Posterior cingulate gyrus (tissue), 11 donors: ENCODE measurements at regions of chr17 and their contacts with region 1.

Region 1: GRCh38 chr17:29613352-29613837 is 9.3 kb downstream of the CORO6 start:
- DNase-seq: peak; percentile 90 to 99 (median 94)

Region 2: GRCh38 chr17:29461483-29462206 is 151.8 kb before region 1 on chr17:
- intact Hi-C with region 1: no loop called
- DNase-seq: no peak

Region 3: DNA sequence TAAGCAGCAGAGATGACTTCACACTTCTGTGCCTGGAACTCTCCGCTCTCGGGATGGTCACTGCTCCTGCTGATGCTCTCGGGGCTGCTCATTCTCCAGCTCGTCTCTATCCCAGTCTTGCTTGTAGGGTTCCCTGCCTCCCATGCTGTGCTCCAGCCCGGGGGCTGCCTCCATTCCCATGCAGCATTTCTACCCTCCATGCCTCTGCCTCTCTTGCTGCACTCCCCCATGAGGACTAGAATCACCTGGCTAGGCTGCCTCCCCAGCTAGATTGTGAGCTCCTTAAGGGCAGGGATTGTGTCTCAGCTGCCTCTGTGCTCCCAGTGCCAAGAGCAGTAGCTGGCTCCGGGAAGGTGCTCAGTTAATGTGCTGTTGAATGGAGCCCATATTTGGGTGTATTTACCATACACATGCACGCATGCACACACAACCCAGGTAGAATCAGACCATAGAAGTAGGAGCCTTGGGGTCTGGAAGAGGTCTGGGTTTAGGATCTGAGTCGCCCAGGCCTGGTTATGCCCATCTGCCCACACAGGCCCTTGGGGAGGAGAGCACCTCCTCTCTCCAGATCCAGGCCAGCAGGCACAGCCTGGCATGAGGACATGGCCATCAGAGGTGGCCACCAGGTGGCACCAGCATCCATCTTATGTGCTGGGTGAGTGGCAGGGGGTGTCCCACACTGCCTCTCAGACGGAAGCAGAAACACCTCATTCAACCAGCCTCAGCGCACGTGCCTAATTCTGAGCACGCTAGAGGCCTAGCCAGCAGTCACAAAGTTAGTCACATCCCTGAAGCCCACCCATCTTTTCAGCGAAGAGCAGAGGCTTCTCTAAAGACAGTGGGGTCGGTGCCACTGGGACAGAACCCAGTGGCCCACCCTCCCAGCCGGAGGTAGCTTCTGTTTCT is 33.3 kb before region 1 on chr17:
- intact Hi-C with region 1: loop called (anchors 1 kb)
- DNase-seq: peak; percentile 83 to 98 (median 93)

Region 4: GRCh38 chr17:29591737-29592624 is 21.4 kb before region 1 on chr17:
- intact Hi-C with region 1: loop called (anchors 1 kb)
- DNase-seq: peak; percentile 85 to 99 (median 94)